ENCODE measurements at regions of chr11 and their contacts with region 1.

Region 1: DNA sequence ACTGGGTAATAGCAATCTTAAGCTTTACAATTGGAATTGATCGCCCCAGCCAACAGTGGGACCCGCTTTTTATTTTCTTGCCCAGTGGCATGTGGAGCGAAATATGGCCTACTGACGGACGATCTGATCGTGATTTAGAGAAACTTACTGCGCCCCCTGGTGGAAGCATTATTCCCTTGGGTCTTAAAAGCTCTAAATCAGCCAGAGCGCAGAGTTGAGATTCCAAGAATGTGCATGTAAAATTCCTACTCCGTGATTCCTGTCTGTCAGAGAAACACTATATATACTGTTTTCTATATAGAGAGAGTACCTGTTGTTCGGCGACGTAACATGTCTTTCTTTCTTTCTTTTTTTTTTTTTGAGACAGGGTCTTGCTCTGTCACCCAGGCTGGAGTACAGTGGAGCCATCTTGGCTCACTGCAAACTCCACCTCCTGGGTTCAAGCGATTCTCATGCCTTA is 3.7 kb upstream of the DPF2 start:
- DNase-seq: peak; percentile 94
- H3K4me3 ChIP-seq: no peak overlapping the region
- H3K27ac ChIP-seq: peak overlapping the region; percentile 41; the same call in 1 of the 2 replicates
- H3K4me1 ChIP-seq: peaks cover 4% of the 10 kb centered on the region; the same call in 1 of the 2 replicates
- H3K27me3 ChIP-seq: no peaks in the 10 kb centered on the region

Region 2: DNA sequence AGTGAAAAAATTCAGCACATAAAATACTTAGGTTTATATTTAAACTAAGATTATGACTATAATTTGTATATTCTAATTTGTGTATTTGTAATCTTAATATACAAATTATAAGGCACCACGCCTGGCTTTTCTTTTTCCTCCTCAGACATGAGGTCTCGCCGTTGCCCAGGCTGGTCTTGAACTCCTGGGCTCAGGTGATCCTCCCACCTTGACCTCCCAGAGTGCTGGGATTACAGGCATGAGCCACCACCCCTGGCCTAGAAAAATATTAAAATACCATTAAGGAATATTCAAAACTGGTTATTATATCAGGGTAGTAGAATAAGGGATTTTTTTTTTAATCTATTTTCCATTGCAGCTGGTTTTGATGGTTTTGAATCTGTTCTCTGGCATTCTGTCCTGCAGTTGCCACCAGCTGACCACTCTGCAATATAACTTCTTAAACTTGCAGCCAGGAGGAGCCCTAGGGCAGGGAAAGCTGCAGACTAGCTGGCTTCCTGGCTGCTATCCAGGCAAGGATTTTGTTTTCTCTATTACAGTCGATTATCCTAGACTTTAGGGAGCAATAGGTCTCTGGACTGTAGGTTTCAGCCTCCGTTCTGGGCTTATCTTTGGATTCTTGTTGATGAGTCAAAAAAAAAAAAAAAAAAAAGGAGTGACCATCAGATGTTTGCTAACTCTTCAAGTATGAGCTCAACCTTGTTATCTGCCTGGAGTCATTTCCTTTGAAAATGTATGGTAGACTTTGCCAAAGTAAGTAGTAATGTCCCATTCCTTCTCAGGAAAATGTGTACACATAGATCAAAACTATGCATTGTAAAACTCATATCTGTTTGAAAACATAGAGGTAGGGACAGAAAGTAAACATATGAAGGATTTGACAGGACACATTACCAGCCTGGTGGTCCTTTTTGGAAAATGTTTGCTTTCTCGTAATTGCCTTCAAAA is 55.0 kb before region 1 on chr11:
- in situ Hi-C with region 1: loop called (anchors 10 kb)
- DNase-seq: peak; percentile 96
- H3K4me3 ChIP-seq: no peak overlapping the region
- H3K27ac ChIP-seq: peak overlapping the region; percentile 62
- H3K4me1 ChIP-seq: peaks cover 47% of the 10 kb centered on the region
- H3K27me3 ChIP-seq: no peaks in the 10 kb centered on the region

Region 3: GRCh38 chr11:65606876-65607613 is 277.1 kb after region 1 on chr11:
- in situ Hi-C with region 1: no loop called
- DNase-seq: peak; percentile 98
- H3K4me3 ChIP-seq: peak overlapping the region; percentile 53
- H3K27ac ChIP-seq: peak overlapping the region; percentile 35
- H3K4me1 ChIP-seq: peaks cover 15% of the 10 kb centered on the region; the same call in 1 of the 2 replicates
- H3K27me3 ChIP-seq: no peaks in the 10 kb centered on the region